ENCODE measurements at regions of chr1 and their contacts with region 1.

Region 1: DNA sequence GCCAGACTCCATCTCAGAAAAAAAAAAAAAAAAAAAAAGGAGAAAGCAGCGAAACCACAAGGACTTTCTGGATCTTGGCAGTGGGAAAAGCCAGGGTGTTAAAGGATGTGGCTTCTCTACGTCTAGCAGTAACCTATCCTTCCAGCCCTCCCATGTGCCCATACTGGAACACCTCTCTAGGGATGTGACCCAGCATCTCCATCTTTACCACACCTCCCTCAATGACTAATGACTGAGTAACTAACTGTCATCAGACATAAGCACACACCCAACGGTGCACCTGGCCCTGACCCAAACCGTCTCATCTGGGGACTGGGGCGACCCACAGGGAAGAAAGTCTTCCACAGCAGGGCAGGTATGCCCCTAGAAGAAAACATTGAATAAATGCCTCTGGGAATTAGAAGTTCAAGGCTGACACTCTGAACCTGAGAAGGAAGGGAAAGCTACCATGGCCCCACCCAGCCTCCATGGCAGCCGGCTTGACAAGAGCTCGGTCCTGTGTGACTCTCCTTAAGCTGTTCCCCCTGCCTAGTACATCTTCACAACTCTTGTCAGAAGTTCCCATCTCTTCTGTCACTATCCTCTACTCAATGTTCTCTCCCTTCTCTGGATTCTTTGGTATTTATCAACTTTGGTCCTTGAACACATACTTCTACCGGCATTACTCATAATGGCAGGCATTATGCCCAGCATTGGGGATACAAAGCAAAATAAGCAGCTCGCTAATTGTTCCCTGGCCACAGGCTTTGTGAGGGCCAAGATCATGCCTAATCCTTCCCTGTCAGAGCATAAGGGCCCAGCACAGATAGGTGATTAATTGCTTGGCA is 14.8 kb upstream of the PAQR6 start:
- DNase-seq: no peak
- H3K4me3 ChIP-seq: no peak overlapping the region
- H3K27ac ChIP-seq: peak overlapping the region in 34 of 59 donors; percentile 0 to 90 (median 65)
- H3K27me3 ChIP-seq: no peaks in the 10 kb centered on the region
- CTCF ChIP-seq: no peak

Region 2: DNA sequence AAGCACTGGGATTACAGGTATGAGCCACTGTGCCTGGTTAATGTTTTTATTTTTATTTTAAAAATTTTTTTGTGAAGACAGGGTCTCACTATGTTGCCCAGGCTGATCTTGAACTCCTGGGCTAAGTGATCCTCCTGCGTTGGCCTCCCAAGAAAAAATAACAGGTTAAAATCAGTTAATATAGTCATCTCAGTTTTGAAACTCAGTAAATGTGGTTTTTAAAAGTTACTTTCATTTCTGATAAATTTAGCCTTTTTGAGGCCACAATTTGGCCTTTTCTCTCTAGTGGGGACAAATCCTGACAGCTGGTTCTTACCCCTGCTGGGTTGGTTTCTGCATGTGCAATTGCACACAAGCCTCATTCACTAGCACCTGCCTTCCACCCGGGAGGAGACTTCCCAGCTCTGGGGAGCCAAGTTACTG is 36.5 kb before region 1 on chr1:
- intact Hi-C with region 1: loop called in 1 of 2 experiments (anchors 5 kb)
- DNase-seq: no peak
- H3K4me3 ChIP-seq: no peak overlapping the region
- H3K27ac ChIP-seq: peak overlapping the region; percentile 2 to 98 (median 87)
- H3K27me3 ChIP-seq: no peaks in the 10 kb centered on the region
- CTCF ChIP-seq: no peak

Region 3: GRCh38 chr1:156465747-156466365 is 203.2 kb after region 1 on chr1:
- intact Hi-C with region 1: no loop called
- DNase-seq: no peak
- H3K4me3 ChIP-seq: no peak overlapping the region
- H3K27ac ChIP-seq: peak overlapping the region in 46 of 59 donors; percentile 3 to 80 (median 55)
- H3K27me3 ChIP-seq: no peaks in the 10 kb centered on the region
- CTCF ChIP-seq: peak in 2 of 56 donors; percentile 6 to 18